HAP-1 (cell line): ENCODE measurements at regions of chr9 and their contacts with region 1.

Region 1: GRCh38 chr9:15889555-15889954 is 336.7 kb downstream of the CCDC171 start:
- DNase-seq: no peak
- H3K4me3 ChIP-seq: no peak overlapping the region
- H3K4me1 ChIP-seq: no peaks in the 10 kb centered on the region
- H3K27me3 ChIP-seq: no peaks in the 10 kb centered on the region

Region 2: GRCh38 chr9:14561929-14562405 is 1327.6 kb before region 1 on chr9:
- in situ Hi-C with region 1: no loop called
- DNase-seq: no peak
- H3K4me3 ChIP-seq: no peak overlapping the region
- H3K4me1 ChIP-seq: no peaks in the 10 kb centered on the region
- H3K27me3 ChIP-seq: no peaks in the 10 kb centered on the region

Region 3: DNA sequence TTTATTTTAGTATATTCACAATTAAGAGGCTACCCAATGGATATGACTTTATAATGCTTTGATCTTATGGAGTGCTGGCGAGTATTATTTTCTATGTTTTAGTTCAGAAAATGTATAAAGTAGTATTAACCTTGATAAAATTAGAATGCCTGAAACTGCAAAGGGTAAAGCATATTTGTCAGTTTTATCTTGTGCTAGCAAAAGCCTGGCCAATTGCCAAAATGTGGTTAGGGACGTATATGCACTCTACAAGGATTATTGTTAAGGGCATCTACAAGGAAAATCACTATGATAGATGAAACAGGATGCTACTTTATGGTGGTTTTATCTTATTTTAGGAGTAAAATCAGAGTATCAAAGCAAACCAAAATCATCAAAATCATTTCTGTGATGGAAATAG is 55.0 kb before region 1 on chr9:
- in situ Hi-C with region 1: no loop called
- DNase-seq: no peak
- H3K4me3 ChIP-seq: no peak overlapping the region
- H3K4me1 ChIP-seq: no peaks in the 10 kb centered on the region
- H3K27me3 ChIP-seq: peaks cover under 1% of the 10 kb centered on the region; the same call in 1 of the 2 replicates

Region 4: DNA sequence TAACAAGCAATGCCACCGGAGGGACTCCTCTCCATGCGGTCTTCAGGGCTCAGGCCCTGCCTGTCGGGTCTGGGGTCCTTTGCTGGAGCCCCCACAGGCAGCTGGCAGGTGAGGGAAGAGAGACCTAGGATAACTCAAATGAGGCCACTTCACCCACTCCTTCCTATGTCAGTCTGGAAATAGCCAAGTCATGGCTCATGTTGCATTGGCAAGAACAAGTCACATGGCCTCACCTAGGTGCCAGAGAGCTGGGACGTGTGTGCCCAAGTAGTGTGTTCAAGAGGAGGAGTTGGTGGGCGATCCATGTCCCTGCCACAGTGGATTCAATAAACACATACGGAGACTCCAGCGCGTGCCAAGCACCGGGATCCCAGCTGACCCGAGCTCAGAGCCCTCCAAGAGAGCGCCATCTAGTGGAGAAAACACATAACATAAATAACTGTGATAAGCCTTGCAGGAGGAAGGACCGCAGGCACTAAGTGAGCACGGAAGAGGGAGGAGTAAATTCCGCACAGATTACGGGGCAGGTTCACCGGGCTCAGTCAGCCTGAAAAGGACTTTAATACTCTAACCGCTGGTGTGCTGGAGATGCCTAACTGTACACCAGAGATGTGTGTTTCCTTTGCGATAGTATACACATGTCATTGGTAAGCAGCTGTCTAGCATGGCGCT is 244.1 kb after region 1 on chr9:
- in situ Hi-C with region 1: loop called (anchors 25 kb)
- DNase-seq: peak; percentile 59 to 69
- H3K4me3 ChIP-seq: no peak overlapping the region
- H3K4me1 ChIP-seq: no peaks in the 10 kb centered on the region
- H3K27me3 ChIP-seq: 0 out of 2 replicates have a peak, but pooled peaks cover 2% of the 10 kb centered on the region